ENCODE measurements at regions of chr17 and their contacts with region 1.

Region 1: DNA sequence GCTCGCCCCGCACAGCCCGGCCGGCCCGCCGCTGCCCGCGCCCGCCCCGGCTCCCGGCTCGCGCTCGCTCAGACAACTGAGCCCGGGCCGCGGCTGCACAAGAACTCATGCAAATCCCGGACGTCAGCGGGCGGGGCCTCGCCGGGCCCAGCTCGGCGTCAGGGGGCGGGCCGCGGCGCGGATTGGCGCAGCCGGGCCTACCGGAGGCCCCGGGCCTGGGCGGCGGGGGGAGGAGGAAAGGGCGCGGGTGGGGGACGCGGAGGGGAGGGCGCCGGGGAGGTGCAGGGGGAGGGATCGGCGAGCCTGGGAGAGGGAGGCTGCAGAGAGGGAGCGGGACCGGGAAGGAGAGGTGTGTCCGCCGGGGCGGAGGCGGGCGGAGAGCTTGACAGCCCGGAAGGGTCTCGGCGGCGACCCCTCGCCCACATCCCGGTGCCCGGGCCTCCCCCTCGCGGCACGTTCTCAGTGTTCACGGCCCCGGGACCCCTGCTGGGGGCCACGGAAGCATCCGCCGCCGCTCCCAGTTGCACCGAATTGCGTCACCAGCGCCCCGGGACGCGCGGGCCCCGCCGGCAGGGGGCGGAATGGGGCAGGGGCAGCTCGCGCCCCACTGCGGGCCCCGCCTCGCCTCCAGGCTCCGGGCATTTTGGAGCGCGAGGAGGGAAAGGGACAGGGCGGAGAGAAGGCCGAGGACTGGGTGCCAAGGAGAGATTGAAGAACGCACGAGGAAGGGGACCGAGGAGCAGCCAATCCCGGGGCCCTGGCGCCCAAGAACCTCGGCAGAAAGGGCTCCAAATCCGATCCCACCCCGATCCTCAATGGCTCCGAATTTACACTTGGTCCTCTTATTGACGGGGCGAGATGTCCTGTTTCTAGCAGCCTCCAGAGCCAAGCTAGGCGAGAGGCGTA is at the start of gene CBX4:
- DNase-seq: peak; percentile 84
- H3K4me3 Mint-ChIP-seq: peak within 1 kb of the TSS; percentile 94
- H3K27ac Mint-ChIP-seq: peak within 1 kb of the TSS; percentile 94
- H3K4me1 Mint-ChIP-seq: peaks cover 19% of the 10 kb centered on the region
- H3K27me3 Mint-ChIP-seq: peaks cover 27% of the 10 kb centered on the region
- total RNA-seq, gene CBX4: 22.4 and 23.8 TPM in 2 replicates

Region 2: DNA sequence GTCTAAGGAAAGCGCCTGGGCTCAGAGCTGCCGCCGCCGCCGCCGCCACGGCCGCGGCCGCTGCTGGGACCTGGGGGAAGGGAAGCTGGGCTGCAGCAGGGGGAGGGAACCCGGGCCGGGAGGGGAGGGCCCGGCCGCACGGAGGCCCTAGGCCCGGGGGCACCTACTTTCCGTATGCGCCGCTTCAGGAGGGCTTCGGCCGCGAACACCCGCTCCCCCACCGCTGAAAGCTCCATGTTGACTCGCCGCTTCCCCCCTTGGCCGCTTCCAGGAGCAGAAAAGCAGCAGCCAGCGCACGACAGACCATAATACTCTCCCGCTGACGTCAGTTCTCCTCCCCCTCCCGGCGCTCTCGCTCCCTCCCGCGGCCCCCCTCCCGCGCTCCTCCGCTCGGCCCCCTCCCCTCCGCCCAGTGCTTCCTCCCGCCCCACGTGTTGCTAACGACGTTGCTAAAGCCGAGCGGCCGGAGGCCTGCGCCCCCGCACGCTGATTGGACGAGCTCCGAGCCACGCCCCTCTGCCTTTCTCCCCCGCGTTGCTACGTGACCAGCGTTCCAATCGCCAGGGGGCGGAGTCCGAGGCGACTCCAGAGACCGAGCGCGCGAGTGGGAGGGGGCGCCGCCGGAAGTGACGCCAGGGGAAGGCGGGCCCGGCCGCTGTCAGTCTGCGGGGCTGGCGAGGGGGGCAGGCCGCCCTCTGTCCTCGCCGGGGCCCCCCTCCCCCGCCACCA is 42.7 kb before region 1 on chr17 and contains the start of gene CBX8:
- intact Hi-C with region 1: loop called (anchors 1 kb)
- DNase-seq: peak; percentile 100
- H3K4me3 Mint-ChIP-seq: peak within 1 kb of the TSS; percentile 85
- H3K27ac Mint-ChIP-seq: peak within 1 kb of the TSS; percentile 77
- H3K4me1 Mint-ChIP-seq: peaks cover 23% of the 10 kb centered on the region
- H3K27me3 Mint-ChIP-seq: peaks cover 42% of the 10 kb centered on the region
- total RNA-seq, gene CBX8: 6.2 and 6.6 TPM in 2 replicates

Region 3: GRCh38 chr17:79810130-79811010 is 29.2 kb before region 1 on chr17:
- intact Hi-C with region 1: loop called (anchors 1 kb)
- DNase-seq: peak; percentile 79
- H3K4me3 Mint-ChIP-seq: peak overlapping the region; percentile 2
- H3K27ac Mint-ChIP-seq: peak overlapping the region; percentile 48
- H3K4me1 Mint-ChIP-seq: peaks cover 38% of the 10 kb centered on the region
- H3K27me3 Mint-ChIP-seq: peaks cover 64% of the 10 kb centered on the region

Region 4: DNA sequence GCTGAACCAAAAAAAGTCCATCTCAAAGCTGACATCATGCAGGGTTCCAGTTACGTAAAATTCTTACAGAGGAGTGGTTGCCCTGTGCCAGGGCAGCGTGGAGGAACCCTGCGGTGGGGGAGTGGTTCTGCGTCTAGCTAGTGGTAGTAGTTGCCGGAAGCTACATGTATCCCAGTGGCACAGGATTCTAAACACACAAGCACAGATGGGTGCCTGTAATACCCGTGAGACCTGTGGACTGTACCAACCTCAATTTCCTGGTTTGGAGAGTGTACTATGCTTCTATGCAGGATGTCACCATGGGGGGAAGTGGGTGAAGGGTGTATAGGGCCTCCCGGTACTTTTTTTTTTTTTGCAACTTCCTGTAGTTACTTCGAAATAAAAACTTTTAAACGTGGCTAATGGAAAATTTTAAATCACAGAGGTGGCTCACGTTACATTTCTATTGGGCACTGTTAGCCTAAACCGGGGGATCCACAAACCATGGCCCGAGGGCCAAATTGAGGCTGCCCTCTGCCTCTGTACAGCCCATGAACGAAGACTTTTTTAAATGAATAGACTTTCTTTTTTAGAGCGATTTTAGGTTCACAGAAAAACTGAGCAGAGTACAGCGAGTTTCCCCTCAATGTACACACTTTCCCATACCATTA is 157.5 kb after region 1 on chr17:
- intact Hi-C with region 1: loop called (anchors 2 kb)
- DNase-seq: peak; percentile 73
- H3K4me3 Mint-ChIP-seq: peak overlapping the region; percentile 60
- H3K27ac Mint-ChIP-seq: peak overlapping the region; percentile 96
- H3K4me1 Mint-ChIP-seq: peaks cover 47% of the 10 kb centered on the region
- H3K27me3 Mint-ChIP-seq: no peaks in the 10 kb centered on the region

Region 5: DNA sequence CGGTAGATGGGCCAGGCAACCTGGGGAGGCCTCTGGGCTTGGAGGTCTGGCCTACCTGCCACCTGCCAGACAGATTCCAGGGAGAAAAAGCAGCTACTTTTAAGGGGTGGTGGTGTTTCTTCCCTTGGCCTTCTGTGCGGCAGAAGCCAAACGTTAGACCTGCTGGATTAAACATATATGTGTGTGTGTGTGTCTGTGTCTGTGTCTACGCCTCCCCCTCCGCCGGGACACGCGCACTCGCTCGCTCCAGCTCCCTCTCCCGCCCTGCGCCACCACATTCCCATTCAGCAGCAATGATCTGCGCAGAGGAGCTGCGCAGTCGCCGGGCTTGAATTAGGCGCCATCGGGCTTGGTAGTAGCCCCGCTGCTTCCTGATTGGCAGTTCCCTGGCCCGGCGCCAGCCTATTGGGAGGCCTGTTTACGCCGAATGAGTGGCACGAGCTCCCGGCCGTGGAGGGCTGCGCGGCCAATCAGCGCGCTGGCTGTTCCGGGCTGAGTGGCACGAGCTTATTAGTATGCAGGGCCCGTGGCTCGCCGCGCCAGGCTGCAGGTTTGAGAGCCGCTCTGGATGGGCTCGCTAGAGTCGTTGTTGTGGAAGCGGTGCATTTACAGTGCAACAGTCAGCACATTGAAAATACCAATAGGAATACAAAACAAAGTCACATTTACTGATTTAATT is 1555.4 kb after region 1 on chr17 and contains the start of gene BAHCC1:
- intact Hi-C with region 1: loop called (anchors 10 kb)
- DNase-seq: peak; percentile 62
- H3K4me3 Mint-ChIP-seq: peak within 1 kb of the TSS; percentile 74
- H3K27ac Mint-ChIP-seq: peak within 1 kb of the TSS; percentile 63
- H3K4me1 Mint-ChIP-seq: peaks cover 20% of the 10 kb centered on the region
- H3K27me3 Mint-ChIP-seq: peaks cover 43% of the 10 kb centered on the region
- total RNA-seq, gene BAHCC1: 0.02 and 0.08 TPM in 2 replicates